Spleen (tissue), 13 donors: ENCODE measurements at regions of chr11 and their contacts with region 1.

Region 1: DNA sequence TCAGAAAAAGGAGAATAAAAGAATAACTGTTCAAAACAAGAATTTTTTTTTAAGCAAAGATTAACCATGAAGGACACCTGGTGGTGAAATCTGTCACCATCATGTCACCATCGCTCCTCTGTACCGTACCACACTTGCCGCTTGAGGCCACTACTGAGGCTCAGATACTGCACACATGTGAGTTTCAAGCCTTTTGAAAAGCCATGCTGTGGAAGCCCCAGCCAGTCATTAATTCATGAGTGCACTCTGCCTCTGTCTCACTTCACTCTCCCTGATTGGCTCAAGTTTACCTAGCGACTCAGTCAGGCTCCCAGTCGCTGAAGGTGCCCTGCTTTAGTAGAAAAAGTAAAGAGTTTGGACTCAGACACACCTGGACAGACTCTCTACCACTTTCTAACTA is 6.6 kb upstream of the MS4A12 start:
- DNase-seq: peak; percentile 75
- H3K4me3 ChIP-seq: no peak overlapping the region
- H3K27ac ChIP-seq: no peak overlapping the region
- H3K4me1 ChIP-seq: peaks cover 0 to 36% (median 8%) of the 10 kb centered on the region in 6 donors
- H3K27me3 ChIP-seq: peaks cover 0 to 3% (median 0%) of the 10 kb centered on the region in 7 donors
- CTCF ChIP-seq: peak; percentile 31 to 81 (median 67)
- POLR2A ChIP-seq: no peak

Region 2: GRCh38 chr11:60235321-60235720 is 250.7 kb before region 1 on chr11:
- intact Hi-C with region 1: no loop called
- DNase-seq: no peak
- H3K4me3 ChIP-seq: no peak overlapping the region
- H3K27ac ChIP-seq: peak overlapping the region in 1 of 8 donors; percentile 30
- H3K4me1 ChIP-seq: peaks cover 0 to 10% (median 0%) of the 10 kb centered on the region in 6 donors
- H3K27me3 ChIP-seq: no peaks in the 10 kb centered on the region
- CTCF ChIP-seq: no peak
- POLR2A ChIP-seq: no peak

Region 3: GRCh38 chr11:60363542-60364510 is 122.2 kb before region 1 on chr11:
- intact Hi-C with region 1: loop called (anchors 5 kb)
- DNase-seq: no peak
- H3K4me3 ChIP-seq: peak overlapping the region in 4 of 8 donors; percentile 0 to 60 (median 16)
- H3K27ac ChIP-seq: peak overlapping the region; percentile 16 to 89 (median 80)
- H3K4me1 ChIP-seq: peaks cover 0 to 61% (median 26%) of the 10 kb centered on the region in 6 donors
- H3K27me3 ChIP-seq: no peaks in the 10 kb centered on the region
- CTCF ChIP-seq: peak; percentile 59 to 84 (median 76)
- POLR2A ChIP-seq: no peak

Region 4: DNA sequence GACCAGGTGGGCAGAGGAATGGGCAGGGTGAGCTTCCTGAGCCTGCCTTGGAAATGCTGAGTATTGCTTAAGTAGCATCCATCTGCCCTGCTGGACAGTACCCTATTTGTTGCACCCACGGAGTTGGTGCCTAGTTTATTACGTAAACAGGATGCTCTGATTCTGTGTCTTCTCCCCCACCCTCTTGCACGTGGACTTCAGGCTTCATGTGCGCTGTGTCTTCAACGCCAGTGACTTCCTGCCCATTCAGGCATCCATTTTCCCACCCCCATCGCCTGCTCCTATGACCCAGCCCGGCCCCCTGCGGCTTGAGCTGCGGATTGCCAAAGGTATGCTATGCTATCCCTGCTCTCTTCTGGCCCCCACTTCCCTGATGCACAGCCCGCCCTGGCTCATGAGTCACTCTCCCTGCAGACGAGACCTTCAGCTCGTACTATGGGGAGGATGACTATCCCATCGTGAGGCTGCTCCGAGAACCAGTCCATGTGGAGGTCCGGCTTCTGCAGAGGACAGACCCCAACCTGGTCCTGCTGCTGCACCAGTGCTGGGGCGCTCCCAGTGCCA is 387.1 kb after region 1 on chr11:
- intact Hi-C with region 1: no loop called
- DNase-seq: peak; percentile 72
- H3K4me3 ChIP-seq: no peak overlapping the region
- H3K27ac ChIP-seq: no peak overlapping the region
- H3K4me1 ChIP-seq: peaks cover 0 to 30% (median 8%) of the 10 kb centered on the region in 6 donors
- H3K27me3 ChIP-seq: peaks cover 0 to 11% (median 0%) of the 10 kb centered on the region in 7 donors
- CTCF ChIP-seq: no peak
- POLR2A ChIP-seq: no peak